Endothelial cell of umbilical vein (primary cell): ENCODE measurements at regions of chr10 and their contacts with region 1.

Region 1: DNA sequence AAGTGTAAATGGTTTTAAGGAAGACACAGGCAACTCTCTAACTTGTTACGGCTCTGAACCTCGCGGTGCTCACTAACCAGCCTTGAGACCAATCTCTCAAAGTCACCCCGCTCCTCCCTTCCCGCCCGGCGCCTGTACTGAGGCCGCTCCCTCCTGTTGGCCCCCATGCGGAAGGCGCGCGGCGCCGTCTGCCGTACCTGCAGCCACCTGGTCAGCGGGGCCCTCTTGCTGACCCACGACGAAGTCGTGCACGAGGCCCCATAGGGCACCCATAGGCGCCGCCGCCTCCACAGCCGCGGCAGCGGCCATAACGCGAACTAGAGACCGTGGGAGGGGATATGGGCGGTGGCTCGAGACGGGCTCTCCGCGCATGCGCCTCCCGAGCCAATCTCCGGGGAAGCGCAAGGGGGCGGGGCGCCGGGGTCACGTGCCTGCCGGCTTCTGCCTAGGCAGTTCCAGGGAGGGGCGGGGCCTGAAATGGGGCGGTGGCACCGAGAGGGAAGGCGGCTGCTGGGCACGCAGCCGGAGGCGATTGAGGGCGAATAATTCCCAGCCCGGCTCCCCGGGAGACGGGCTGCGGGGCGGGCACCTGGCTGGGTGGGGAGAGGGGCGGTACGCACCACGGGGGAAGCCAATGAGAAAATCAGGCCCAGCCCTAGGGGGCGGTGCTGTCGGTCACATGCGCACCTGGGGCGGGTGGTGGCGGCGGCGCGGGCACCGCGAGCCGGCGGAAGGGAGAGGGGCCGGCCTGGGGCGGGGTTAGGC is at the start of gene MMS19:
- DNase-seq: peak; percentile 99
- H3K4me3 ChIP-seq: peak within 1 kb of the TSS; percentile 70 to 93 (median 81)
- H3K27ac ChIP-seq: peak within 1 kb of the TSS; percentile 40
- H3K4me1 ChIP-seq: peaks cover 33% of the 10 kb centered on the region
- H3K27me3 ChIP-seq: no peaks in the 10 kb centered on the region
- CTCF ChIP-seq: no peak
- POLR2A ChIP-seq: peak; percentile 69
- total RNA-seq, gene MMS19: 80.9 and 95.2 TPM in 2 replicates

Region 2: GRCh38 chr10:97508342-97508741 is 10.1 kb after region 1 on chr10:
- CTCF ChIA-PET with region 1: interaction called, 10 read pairs
- POLR2A ChIA-PET with region 1: no interaction called
- dilution Hi-C with region 1: no loop called
- intact Hi-C with region 1: loop called (anchors 1 kb)
- DNase-seq: peak; percentile 78
- H3K4me3 ChIP-seq: no peak overlapping the region
- H3K27ac ChIP-seq: no peak overlapping the region
- H3K4me1 ChIP-seq: peaks cover 9% of the 10 kb centered on the region
- H3K27me3 ChIP-seq: no peaks in the 10 kb centered on the region
- CTCF ChIP-seq: no peak
- POLR2A ChIP-seq: no peak

Region 3: DNA sequence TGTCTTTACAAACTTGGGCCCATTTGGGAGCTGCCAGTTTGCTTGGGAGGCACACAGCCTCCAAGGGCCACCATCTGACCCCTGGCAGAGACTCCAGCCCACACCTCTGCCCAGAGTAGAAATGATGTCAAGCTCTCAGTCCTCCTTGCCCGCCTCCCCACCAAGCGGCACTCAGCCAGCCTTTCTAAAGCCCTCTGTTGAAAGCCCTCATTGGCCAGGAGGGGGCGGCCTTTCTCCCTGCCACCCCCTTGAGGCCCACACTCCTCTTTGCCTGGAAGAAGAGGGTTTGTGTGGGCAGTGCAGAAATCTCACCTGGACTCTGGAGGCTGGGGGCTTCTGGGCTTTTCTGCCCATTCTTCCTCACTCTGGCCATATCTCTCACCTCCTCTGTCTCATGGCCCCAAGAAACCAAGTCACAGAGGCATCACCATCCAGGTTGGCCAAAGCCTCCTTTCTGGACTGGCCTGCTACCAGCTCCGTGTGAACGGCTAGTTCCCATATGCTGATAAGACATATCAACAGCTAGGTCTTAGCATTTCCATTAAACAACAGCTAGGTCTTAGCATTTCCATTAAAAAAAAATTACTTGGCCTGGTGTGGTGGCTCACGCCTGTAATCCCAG is 36.6 kb after region 1 on chr10:
- CTCF ChIA-PET with region 1: interaction called, 33 read pairs
- POLR2A ChIA-PET with region 1: interaction called, 3 read pairs
- dilution Hi-C with region 1: no loop called
- intact Hi-C with region 1: no loop called
- DNase-seq: peak; percentile 55
- H3K4me3 ChIP-seq: no peak overlapping the region
- H3K27ac ChIP-seq: no peak overlapping the region
- H3K4me1 ChIP-seq: peaks cover 9% of the 10 kb centered on the region
- H3K27me3 ChIP-seq: no peaks in the 10 kb centered on the region
- CTCF ChIP-seq: peak; percentile 64 to 82
- POLR2A ChIP-seq: no peak

Region 4: DNA sequence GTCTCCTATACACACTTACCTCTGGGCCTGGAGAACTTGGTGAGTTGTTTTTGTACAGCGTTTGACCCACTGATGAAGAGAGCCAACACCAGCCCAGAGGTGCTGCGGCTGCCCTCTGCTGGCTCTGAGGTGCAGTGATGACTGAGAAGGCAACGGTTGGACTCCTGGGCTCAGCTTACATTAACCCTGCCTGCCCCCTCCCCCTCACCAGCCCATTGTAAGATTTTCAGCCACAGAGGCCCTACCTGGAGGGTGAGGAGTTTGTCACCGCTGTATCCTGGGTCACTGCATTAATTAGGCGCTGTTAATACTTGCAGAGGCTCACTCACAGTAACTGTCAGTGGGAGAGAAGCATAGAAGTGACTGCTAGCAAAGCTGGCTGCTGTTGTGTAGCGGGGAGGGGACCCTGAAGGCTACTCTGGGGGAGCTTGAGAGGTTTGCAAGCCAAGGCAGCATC is 55.3 kb after region 1 on chr10:
- CTCF ChIA-PET with region 1: interaction called, 37 read pairs
- POLR2A ChIA-PET with region 1: no interaction called
- dilution Hi-C with region 1: no loop called
- intact Hi-C with region 1: loop called (anchors 2 kb)
- DNase-seq: peak; percentile 82
- H3K4me3 ChIP-seq: no peak overlapping the region
- H3K27ac ChIP-seq: no peak overlapping the region
- H3K4me1 ChIP-seq: peaks cover 3% of the 10 kb centered on the region
- H3K27me3 ChIP-seq: no peaks in the 10 kb centered on the region
- CTCF ChIP-seq: peak; percentile 83 to 96
- POLR2A ChIP-seq: no peak

Region 5: GRCh38 chr10:97736902-97737769 is 238.9 kb after region 1 on chr10 and contains the start of gene ZFYVE27:
- CTCF ChIA-PET with region 1: no interaction called
- POLR2A ChIA-PET with region 1: no interaction called
- dilution Hi-C with region 1: no loop called
- intact Hi-C with region 1: loop called (anchors 10 kb)
- DNase-seq: peak; percentile 95
- H3K4me3 ChIP-seq: peak within 1 kb of the TSS; percentile 46 to 72 (median 63)
- H3K27ac ChIP-seq: peak within 1 kb of the TSS; percentile 37
- H3K4me1 ChIP-seq: peaks cover 8% of the 10 kb centered on the region
- H3K27me3 ChIP-seq: no peaks in the 10 kb centered on the region
- CTCF ChIP-seq: no peak
- POLR2A ChIP-seq: peak; percentile 93
- total RNA-seq, gene ZFYVE27: 23.7 and 24.2 TPM in 2 replicates

Region 6: GRCh38 chr10:97827778-97828291 is 329.6 kb after region 1 on chr10:
- CTCF ChIA-PET with region 1: no interaction called
- POLR2A ChIA-PET with region 1: no interaction called
- dilution Hi-C with region 1: no loop called
- intact Hi-C with region 1: no loop called
- DNase-seq: no peak
- H3K4me3 ChIP-seq: no peak overlapping the region
- H3K27ac ChIP-seq: no peak overlapping the region
- H3K4me1 ChIP-seq: no peaks in the 10 kb centered on the region
- H3K27me3 ChIP-seq: peaks cover 0 to 3% of the 10 kb centered on the region in 2 experiments
- CTCF ChIP-seq: no peak
- POLR2A ChIP-seq: no peak